ENCODE measurements at regions of chr17 and their contacts with region 1.

Region 1: DNA sequence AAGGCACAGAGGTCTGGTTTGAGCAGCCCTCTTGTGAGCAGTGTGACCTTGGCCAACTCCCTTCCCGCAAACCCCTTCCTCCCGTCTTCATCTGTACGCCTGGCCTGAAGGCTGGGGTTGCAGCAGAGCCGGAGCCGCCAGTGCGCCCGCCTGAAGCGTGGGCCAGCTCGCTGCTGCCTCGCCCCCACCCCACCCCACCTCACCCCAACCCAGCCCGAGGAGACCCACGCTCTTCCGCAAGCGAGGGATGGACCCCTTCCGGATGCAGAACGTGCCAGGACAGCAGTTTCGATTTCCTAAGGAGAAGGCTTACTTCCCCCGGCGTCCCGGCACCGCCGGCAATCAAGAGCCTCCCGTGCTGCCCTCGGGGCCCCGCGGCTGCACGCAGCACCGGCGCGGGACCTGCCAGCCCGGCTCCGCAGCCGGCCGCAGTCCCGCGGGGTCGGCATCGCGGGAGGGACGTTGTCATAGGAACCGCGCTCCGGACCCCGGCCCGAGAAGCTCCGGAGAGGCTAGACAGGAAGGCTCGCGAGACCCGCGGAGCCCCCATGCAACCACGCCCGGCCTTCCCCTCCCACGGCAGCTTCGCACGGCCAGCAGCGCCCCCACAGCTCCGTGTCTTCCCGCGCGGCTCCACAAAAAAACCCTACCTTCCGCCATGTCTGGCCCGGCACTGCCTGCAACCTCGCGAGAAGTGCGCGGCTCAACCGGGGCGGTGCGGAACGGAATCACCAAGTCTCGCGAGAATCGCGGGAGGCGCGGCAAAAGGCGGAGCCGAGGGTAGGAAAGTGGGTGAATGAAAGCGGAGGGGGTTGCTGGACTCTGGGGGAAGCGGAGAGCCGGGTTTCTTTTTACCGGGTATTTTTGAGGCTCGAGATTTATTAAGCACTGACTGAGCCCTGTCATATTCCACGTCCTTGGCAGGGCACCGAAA is at the start of gene ANKFY1:
- DNase-seq: peak; percentile 98
- H3K4me3 Mint-ChIP-seq: peak within 1 kb of the TSS; percentile 98
- H3K27ac Mint-ChIP-seq: peak within 1 kb of the TSS; percentile 95
- H3K4me1 Mint-ChIP-seq: peaks cover 37% of the 10 kb centered on the region
- H3K27me3 Mint-ChIP-seq: no peaks in the 10 kb centered on the region
- total RNA-seq, gene ANKFY1: 53.8 and 60.1 TPM in 2 replicates

Region 2: GRCh38 chr17:3870871-3871306 is 392.7 kb before region 1 on chr17:
- intact Hi-C with region 1: no loop called
- DNase-seq: no peak
- H3K4me3 Mint-ChIP-seq: peak overlapping the region; percentile 42
- H3K27ac Mint-ChIP-seq: peak overlapping the region; percentile 85
- H3K4me1 Mint-ChIP-seq: peaks cover 8% of the 10 kb centered on the region
- H3K27me3 Mint-ChIP-seq: no peaks in the 10 kb centered on the region

Region 3: GRCh38 chr17:3893003-3893719 is 370.4 kb before region 1 on chr17 and contains the start of gene CAMKK1:
- intact Hi-C with region 1: loop called (anchors 5 kb)
- DNase-seq: peak; percentile 90
- H3K4me3 Mint-ChIP-seq: peak within 1 kb of the TSS; percentile 82
- H3K27ac Mint-ChIP-seq: peak within 1 kb of the TSS; percentile 86
- H3K4me1 Mint-ChIP-seq: peaks cover 30% of the 10 kb centered on the region
- H3K27me3 Mint-ChIP-seq: no peaks in the 10 kb centered on the region
- total RNA-seq, gene CAMKK1: 6.1 and 7.8 TPM in 2 replicates

Region 4: DNA sequence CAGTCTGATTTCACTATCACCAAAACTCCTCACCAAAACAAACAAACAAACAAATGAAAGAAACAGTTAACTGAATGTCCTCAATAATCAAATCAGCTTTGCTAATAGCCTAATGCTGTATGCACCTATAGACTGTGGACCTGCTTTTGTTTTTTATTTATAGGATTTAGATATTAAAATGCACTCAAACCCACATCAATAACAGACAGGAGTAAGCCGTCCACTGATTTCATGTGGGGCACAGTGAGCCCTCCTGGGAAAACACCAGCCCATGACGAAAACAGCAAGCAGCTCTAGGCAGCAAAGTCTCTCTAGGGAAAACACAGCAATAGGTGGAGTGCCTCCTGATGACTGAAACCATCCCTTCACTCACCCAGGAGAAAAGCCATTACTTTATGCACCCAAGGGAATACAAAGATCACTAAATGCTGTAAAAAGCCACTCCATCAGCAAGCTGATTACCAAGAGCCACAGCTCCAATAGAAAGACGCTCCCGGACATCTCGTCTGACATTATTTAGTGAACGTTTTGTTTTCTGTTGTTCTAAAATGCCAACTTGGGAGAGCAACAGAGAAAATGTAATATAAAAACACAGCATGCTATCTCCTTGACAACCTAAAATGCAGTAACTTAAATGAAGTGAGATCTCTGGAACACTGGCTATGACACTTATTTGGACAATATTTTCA is 47.5 kb before region 1 on chr17:
- intact Hi-C with region 1: loop called (anchors 2 kb)
- DNase-seq: no peak
- H3K4me3 Mint-ChIP-seq: no peak overlapping the region
- H3K27ac Mint-ChIP-seq: peak overlapping the region; percentile 15
- H3K4me1 Mint-ChIP-seq: peaks cover 21% of the 10 kb centered on the region
- H3K27me3 Mint-ChIP-seq: no peaks in the 10 kb centered on the region

Region 5: GRCh38 chr17:4304417-4305027 is 41.0 kb after region 1 on chr17:
- intact Hi-C with region 1: loop called (anchors 1 kb)
- DNase-seq: peak; percentile 12
- H3K4me3 Mint-ChIP-seq: no peak overlapping the region
- H3K27ac Mint-ChIP-seq: no peak overlapping the region
- H3K4me1 Mint-ChIP-seq: peaks cover 26% of the 10 kb centered on the region
- H3K27me3 Mint-ChIP-seq: no peaks in the 10 kb centered on the region

Region 6: DNA sequence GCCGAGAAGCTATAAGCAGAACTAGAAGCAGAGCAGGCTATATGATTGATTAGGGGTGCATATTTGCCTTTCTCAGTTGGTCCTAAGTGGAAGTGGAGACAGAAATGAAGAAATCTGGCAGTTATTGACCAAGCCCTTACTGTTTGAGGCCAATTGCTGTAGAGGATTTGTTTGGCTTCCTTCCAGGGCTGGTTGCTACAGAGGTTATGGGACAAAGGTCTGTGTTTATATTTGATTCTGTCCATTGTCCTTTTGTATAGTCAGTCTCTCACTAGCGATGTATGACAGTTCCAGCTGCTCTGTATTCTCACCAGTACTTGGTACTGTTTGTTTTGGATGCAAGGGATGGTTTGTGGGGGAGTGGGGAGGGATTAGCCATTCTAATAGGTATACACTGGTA is 385.2 kb after region 1 on chr17:
- intact Hi-C with region 1: no loop called
- DNase-seq: no peak
- H3K4me3 Mint-ChIP-seq: no peak overlapping the region
- H3K27ac Mint-ChIP-seq: no peak overlapping the region
- H3K4me1 Mint-ChIP-seq: no peaks in the 10 kb centered on the region
- H3K27me3 Mint-ChIP-seq: peaks cover 43% of the 10 kb centered on the region

Region 7: GRCh38 chr17:4903051-4903818 is 639.7 kb after region 1 on chr17 and contains the start of gene CHRNE:
- intact Hi-C with region 1: no loop called
- DNase-seq: peak; percentile 61
- H3K4me3 Mint-ChIP-seq: peak within 1 kb of the TSS; percentile 21
- H3K27ac Mint-ChIP-seq: peak within 1 kb of the TSS; percentile 52
- H3K4me1 Mint-ChIP-seq: peaks cover 25% of the 10 kb centered on the region
- H3K27me3 Mint-ChIP-seq: peaks cover 16% of the 10 kb centered on the region
- total RNA-seq, gene CHRNE: 0.52 and 0.61 TPM in 2 replicates

Measured in activated T-helper 1 cell treated with anti-CD3 and anti-CD28 coated beads, Interleukin-12 subunit alpha, Interleukin-12 subunit beta, Interleukin-2, Interleukin-4 antibody, amounts not matched to agents 30 ng/mL and 10 ng/mL and 1 ng/mL, durations not matched to agents 14 hours and 24 hours and 36 hours (primary cell).